CD4-positive, alpha-beta memory T cell (primary cell): ENCODE measurements at regions of chr2 and their contacts with region 1.

Region 1: GRCh38 chr2:195543902-195544894 is 112.8 kb upstream of the SLC39A10 start:
- DNase-seq: no peak
- H3K4me3 ChIP-seq: no peak overlapping the region
- H3K4me3 Mint-ChIP-seq: peak overlapping the region; percentile 1 to 78 (median 46)
- H3K27ac ChIP-seq: no peak overlapping the region
- H3K27ac Mint-ChIP-seq: peak overlapping the region; percentile 5 to 88 (median 66)
- H3K4me1 ChIP-seq: peaks cover 47% of the 10 kb centered on the region
- H3K4me1 Mint-ChIP-seq: peaks cover 36 to 57% (median 47%) of the 10 kb centered on the region in 4 donors
- H3K27me3 ChIP-seq: no peaks in the 10 kb centered on the region
- H3K27me3 Mint-ChIP-seq: no peaks in the 10 kb centered on the region

Region 2: GRCh38 chr2:195318440-195319111 is 225.6 kb before region 1 on chr2:
- CTCF ChIA-PET with region 1: no interaction called
- POLR2A ChIA-PET with region 1: no interaction called
- intact Hi-C with region 1: no loop called
- DNase-seq: peak; percentile 33 to 48 (median 44)
- H3K4me3 ChIP-seq: no peak overlapping the region
- H3K4me3 Mint-ChIP-seq: no peak overlapping the region
- H3K27ac ChIP-seq: no peak overlapping the region
- H3K27ac Mint-ChIP-seq: no peak overlapping the region
- H3K4me1 ChIP-seq: peaks cover 11% of the 10 kb centered on the region
- H3K4me1 Mint-ChIP-seq: peaks cover 5 to 11% (median 8%) of the 10 kb centered on the region in 4 donors
- H3K27me3 ChIP-seq: no peaks in the 10 kb centered on the region
- H3K27me3 Mint-ChIP-seq: no peaks in the 10 kb centered on the region

Region 3: DNA sequence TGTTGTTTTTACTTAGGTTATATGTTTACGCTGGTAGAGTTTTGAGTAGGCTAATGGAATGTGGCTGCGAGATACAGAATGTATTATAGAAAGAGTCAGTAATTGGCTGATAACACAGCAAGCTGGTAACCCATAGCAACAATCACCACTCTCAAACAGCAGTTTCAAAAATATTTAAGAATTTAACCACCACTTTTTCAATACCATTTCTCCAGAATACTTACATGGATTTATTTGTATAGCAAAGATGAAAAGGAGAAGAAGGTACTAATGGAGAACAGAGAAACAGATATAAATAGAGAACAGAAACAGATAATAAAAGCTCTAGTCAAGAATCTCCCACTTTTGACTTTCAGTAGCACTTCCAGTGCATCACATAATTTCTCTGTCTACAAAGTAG is 75.4 kb before region 1 on chr2:
- CTCF ChIA-PET with region 1: no interaction called
- POLR2A ChIA-PET with region 1: no interaction called
- intact Hi-C with region 1: no loop called
- DNase-seq: no peak
- H3K4me3 ChIP-seq: no peak overlapping the region
- H3K4me3 Mint-ChIP-seq: no peak overlapping the region
- H3K27ac ChIP-seq: no peak overlapping the region
- H3K27ac Mint-ChIP-seq: no peak overlapping the region
- H3K4me1 ChIP-seq: peaks cover 11% of the 10 kb centered on the region
- H3K4me1 Mint-ChIP-seq: peaks cover 0 to 10% (median 2%) of the 10 kb centered on the region in 4 donors
- H3K27me3 ChIP-seq: no peaks in the 10 kb centered on the region
- H3K27me3 Mint-ChIP-seq: no peaks in the 10 kb centered on the region

Region 4: DNA sequence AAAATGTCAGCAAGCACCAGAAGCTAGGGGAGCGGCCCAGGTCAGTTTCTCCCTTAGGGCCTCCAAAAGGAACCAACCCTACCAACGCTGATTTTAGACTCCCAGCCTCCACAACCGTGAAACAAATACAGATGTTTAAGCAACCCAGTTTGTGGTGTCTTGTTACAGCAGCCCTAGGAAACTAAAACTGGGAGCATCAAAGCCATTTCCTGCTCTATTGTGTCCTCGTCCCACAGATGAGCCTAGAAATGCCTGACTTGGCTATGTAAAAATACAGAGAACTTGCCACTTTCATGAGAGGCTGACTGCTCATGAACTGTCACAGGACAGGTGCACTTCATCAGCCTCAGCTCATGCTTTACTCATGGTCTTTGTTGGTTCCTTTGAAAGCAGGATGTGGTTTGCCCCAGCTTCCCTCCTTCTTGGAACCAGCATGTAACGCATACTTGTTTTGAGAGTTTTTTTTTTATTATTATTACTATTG is 15.3 kb after region 1 on chr2:
- CTCF ChIA-PET with region 1: interaction called, 117 read pairs
- POLR2A ChIA-PET with region 1: interaction called, 423 read pairs
- intact Hi-C with region 1: loop called (anchors 1 kb)
- DNase-seq: peak; percentile 87 to 90 (median 89)
- H3K4me3 ChIP-seq: no peak overlapping the region
- H3K4me3 Mint-ChIP-seq: peak overlapping the region; percentile 49 to 85 (median 70)
- H3K27ac ChIP-seq: peak overlapping the region; percentile 31
- H3K27ac Mint-ChIP-seq: peak overlapping the region; percentile 82 to 97 (median 92)
- H3K4me1 ChIP-seq: peaks cover 86% of the 10 kb centered on the region
- H3K4me1 Mint-ChIP-seq: peaks cover 49 to 74% (median 58%) of the 10 kb centered on the region in 4 donors
- H3K27me3 ChIP-seq: no peaks in the 10 kb centered on the region
- H3K27me3 Mint-ChIP-seq: no peaks in the 10 kb centered on the region

Region 5: GRCh38 chr2:195636890-195637289 is 92.7 kb after region 1 on chr2:
- CTCF ChIA-PET with region 1: no interaction called
- POLR2A ChIA-PET with region 1: no interaction called
- intact Hi-C with region 1: no loop called
- DNase-seq: no peak
- H3K4me3 ChIP-seq: no peak overlapping the region
- H3K4me3 Mint-ChIP-seq: no peak overlapping the region
- H3K27ac ChIP-seq: no peak overlapping the region
- H3K27ac Mint-ChIP-seq: no peak overlapping the region
- H3K4me1 ChIP-seq: no peaks in the 10 kb centered on the region
- H3K4me1 Mint-ChIP-seq: peaks cover 0 to 4% (median 0%) of the 10 kb centered on the region in 4 donors
- H3K27me3 ChIP-seq: no peaks in the 10 kb centered on the region
- H3K27me3 Mint-ChIP-seq: no peaks in the 10 kb centered on the region